CD4-positive, alpha-beta T cell (primary cell): ENCODE measurements at regions of chr17 and their contacts with region 1.

Region 1: GRCh38 chr17:1275962-1276736 is 3.3 kb upstream of the TRARG1 start:
- DNase-seq: peak; percentile 58 to 86 (median 70)
- ATAC-seq: peak; percentile 76
- H3K4me3 ChIP-seq: no peak overlapping the region
- H3K4me3 Mint-ChIP-seq: no peak overlapping the region
- H3K27ac ChIP-seq: no peak overlapping the region
- H3K27ac Mint-ChIP-seq: no peak overlapping the region
- H3K4me1 ChIP-seq: peaks cover 8% of the 10 kb centered on the region
- H3K4me1 Mint-ChIP-seq: no peaks in the 10 kb centered on the region
- H3K27me3 ChIP-seq: peaks cover 13 to 15% of the 10 kb centered on the region in 2 experiments
- H3K27me3 Mint-ChIP-seq: peaks cover 35% of the 10 kb centered on the region
- CTCF ChIP-seq: peak; percentile 85

Region 2: GRCh38 chr17:1260086-1260769 is 15.9 kb before region 1 on chr17:
- CTCF ChIA-PET with region 1: no interaction called
- POLR2A ChIA-PET with region 1: no interaction called
- intact Hi-C with region 1: loop called in 1 of 2 experiments (anchors 1 kb)
- DNase-seq: no peak
- ATAC-seq: no peak
- H3K4me3 ChIP-seq: peak overlapping the region; percentile 53
- H3K4me3 Mint-ChIP-seq: peak overlapping the region; percentile 30
- H3K27ac ChIP-seq: no peak overlapping the region
- H3K27ac Mint-ChIP-seq: no peak overlapping the region
- H3K4me1 ChIP-seq: peaks cover 31% of the 10 kb centered on the region
- H3K4me1 Mint-ChIP-seq: peaks cover 27% of the 10 kb centered on the region
- H3K27me3 ChIP-seq: peaks cover 14 to 21% of the 10 kb centered on the region in 2 experiments
- H3K27me3 Mint-ChIP-seq: peaks cover 32% of the 10 kb centered on the region
- CTCF ChIP-seq: no peak

Region 3: DNA sequence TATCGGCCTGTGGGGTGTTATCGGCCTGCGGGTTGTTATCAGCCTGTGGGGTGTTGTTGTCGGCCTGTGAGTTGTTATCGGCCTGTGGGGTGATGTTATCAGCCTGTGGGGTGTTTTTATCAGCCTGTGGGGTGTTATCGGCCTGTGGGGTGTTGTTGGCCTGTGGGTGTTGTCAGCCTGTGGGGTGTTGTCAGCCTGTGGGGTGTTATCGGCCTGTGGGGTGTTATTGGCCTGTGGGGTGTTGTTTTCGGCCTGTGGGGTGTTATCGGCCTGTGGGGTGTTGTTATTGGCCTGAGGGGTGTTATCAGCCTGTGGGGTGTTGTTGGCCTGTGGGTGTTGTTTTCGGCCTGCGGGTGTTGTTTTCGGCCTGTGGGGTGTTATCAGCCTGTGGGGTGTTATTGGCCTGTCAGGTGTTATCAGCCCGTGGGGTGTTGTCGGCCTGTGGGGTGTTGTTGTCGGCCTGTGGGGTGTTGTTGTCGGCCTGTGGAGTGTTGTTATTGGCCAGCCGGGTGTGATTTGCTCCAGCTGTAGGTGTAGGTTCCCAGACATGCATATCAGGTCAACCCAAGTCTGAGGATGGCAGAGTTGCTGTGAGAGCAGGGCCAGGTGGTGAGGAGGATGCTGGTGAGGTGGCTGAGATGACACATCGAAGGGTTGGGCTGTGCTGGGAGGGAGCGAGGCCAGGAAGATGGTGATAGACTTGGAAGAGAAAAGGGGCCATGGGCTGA is 10.4 kb after region 1 on chr17:
- CTCF ChIA-PET with region 1: no interaction called
- POLR2A ChIA-PET with region 1: no interaction called
- intact Hi-C with region 1: no loop called
- DNase-seq: no peak
- ATAC-seq: no peak
- H3K4me3 ChIP-seq: no peak overlapping the region
- H3K4me3 Mint-ChIP-seq: no peak overlapping the region
- H3K27ac ChIP-seq: no peak overlapping the region
- H3K27ac Mint-ChIP-seq: no peak overlapping the region
- H3K4me1 ChIP-seq: no peaks in the 10 kb centered on the region
- H3K4me1 Mint-ChIP-seq: no peaks in the 10 kb centered on the region
- H3K27me3 ChIP-seq: no peaks in the 10 kb centered on the region
- H3K27me3 Mint-ChIP-seq: no peaks in the 10 kb centered on the region
- CTCF ChIP-seq: no peak

Region 4: DNA sequence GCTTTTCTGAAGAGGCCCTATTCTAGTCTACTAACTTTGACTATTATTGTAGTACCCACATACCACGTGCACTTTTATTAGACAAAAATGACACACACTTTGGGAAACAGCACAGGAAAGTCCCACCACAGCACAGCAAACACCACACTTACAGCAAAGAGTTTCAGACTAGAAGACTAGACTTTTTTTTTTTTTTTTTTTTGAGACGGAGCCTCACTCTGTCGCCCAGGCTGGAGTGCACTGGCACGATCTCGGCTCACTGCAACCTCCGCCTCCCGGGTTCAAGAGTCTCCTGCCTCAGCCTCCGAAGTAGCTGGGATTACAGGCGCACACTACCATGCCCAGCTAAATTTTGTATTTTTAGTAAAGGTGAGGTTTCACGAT is 103.8 kb after region 1 on chr17:
- CTCF ChIA-PET with region 1: no interaction called
- POLR2A ChIA-PET with region 1: no interaction called
- intact Hi-C with region 1: no loop called
- DNase-seq: peak in 2 of 14 experiments; percentile 68 to 76
- ATAC-seq: peak; percentile 62
- H3K4me3 ChIP-seq: no peak overlapping the region
- H3K4me3 Mint-ChIP-seq: peak overlapping the region; percentile 27
- H3K27ac ChIP-seq: peak overlapping the region; percentile 24 to 41
- H3K27ac Mint-ChIP-seq: peak overlapping the region; percentile 74
- H3K4me1 ChIP-seq: peaks cover 86% of the 10 kb centered on the region
- H3K4me1 Mint-ChIP-seq: peaks cover 72% of the 10 kb centered on the region
- H3K27me3 ChIP-seq: no peaks in the 10 kb centered on the region
- H3K27me3 Mint-ChIP-seq: no peaks in the 10 kb centered on the region
- CTCF ChIP-seq: no peak